ENCODE measurements at regions of chr5 and their contacts with region 1.

Region 1: GRCh38 chr5:176959051-176959450 is 47.5 kb downstream of the UIMC1 start:
- DNase-seq: peak in 2 of 9 experiments; percentile 51 to 64
- ATAC-seq: peak; percentile 64
- H3K4me3 ChIP-seq: no peak overlapping the region
- H3K4me3 Mint-ChIP-seq: no peak overlapping the region
- H3K27ac ChIP-seq: no peak overlapping the region
- H3K27ac Mint-ChIP-seq: no peak overlapping the region
- H3K4me1 ChIP-seq: no peaks in the 10 kb centered on the region
- H3K4me1 Mint-ChIP-seq: peaks cover 6% of the 10 kb centered on the region
- H3K27me3 ChIP-seq: no peaks in the 10 kb centered on the region
- H3K27me3 Mint-ChIP-seq: no peaks in the 10 kb centered on the region
- CTCF ChIP-seq: peak; percentile 56

Region 2: DNA sequence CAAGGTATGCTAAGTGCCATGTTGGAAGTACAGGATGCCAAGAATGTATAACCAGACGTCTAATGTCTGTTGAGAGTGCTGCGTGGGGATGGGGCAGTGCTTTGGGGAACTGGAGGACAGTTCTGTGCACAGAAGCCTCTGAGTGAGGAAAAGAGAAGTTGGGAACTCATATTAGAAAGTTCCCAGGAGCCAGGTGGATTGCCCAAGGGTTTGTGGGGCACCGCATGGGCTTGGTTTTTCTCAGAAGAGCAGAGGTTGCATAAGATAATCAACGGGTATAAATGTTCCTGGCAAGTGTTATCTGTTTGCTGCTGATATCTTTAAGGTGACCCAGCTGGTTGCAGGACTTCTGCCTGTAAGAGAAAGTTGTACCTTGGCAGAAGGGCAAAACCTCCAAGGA is 1288.0 kb before region 1 on chr5:
- CTCF ChIA-PET with region 1: no interaction called
- POLR2A ChIA-PET with region 1: no interaction called
- intact Hi-C with region 1: loop called in 1 of 2 experiments (anchors 5 kb)
- DNase-seq: no peak
- ATAC-seq: no peak
- H3K4me3 ChIP-seq: no peak overlapping the region
- H3K4me3 Mint-ChIP-seq: no peak overlapping the region
- H3K27ac ChIP-seq: no peak overlapping the region
- H3K27ac Mint-ChIP-seq: peak overlapping the region; percentile 2
- H3K4me1 ChIP-seq: peaks cover 4% of the 10 kb centered on the region
- H3K4me1 Mint-ChIP-seq: peaks cover 66% of the 10 kb centered on the region
- H3K27me3 ChIP-seq: no peaks in the 10 kb centered on the region
- H3K27me3 Mint-ChIP-seq: no peaks in the 10 kb centered on the region
- CTCF ChIP-seq: no peak